ENCODE measurements at regions of chr14 and their contacts with region 1.

Region 1: GRCh38 chr14:88492272-88493089 is 62.3 kb downstream of the PTPN21 start:
- DNase-seq: peak; percentile 48
- ATAC-seq: peak; percentile 98
- H3K4me3 ChIP-seq: no peak overlapping the region
- H3K27ac ChIP-seq: no peak overlapping the region
- H3K4me1 ChIP-seq: no peaks in the 10 kb centered on the region
- H3K27me3 ChIP-seq: no peaks in the 10 kb centered on the region
- CTCF ChIP-seq: peak; percentile 65 to 90 (median 83); a peak in 5 of 6 replicates
- POLR2A ChIP-seq: no peak
- RAD21 ChIP-seq: peak; percentile 72

Region 2: DNA sequence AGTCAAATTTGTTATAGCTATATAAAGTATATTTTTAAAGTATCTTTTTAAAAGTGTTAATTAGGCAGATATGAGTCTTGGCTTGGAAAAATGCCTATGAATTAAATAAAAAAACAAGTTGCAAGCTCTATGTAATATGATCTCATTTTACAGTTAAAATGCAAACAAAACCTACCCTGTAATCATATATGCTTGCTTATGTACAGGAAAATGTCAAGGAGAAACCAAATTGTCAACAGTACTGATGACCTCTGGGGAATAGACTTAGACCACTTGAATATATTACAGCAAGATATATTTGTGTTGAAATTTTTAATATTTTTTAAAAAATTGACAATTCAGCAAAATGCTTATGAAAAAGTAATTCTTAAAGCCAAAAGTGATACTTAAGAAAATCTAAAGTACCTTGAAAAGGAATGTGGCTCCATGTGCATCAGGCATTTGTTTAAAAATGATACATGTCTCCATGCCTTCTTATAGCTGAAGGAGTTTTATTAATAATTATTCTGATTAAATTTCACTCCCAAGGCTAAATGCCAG is 13.1 kb after region 1 on chr14:
- CTCF ChIA-PET with region 1: no interaction called
- POLR2A ChIA-PET with region 1: no interaction called
- RAD21 ChIA-PET with region 1: no interaction called
- intact Hi-C with region 1: no loop called
- DNase-seq: no peak
- ATAC-seq: no peak
- H3K4me3 ChIP-seq: no peak overlapping the region
- H3K27ac ChIP-seq: no peak overlapping the region
- H3K4me1 ChIP-seq: no peaks in the 10 kb centered on the region
- H3K27me3 ChIP-seq: no peaks in the 10 kb centered on the region
- CTCF ChIP-seq: no peak
- POLR2A ChIP-seq: no peak
- RAD21 ChIP-seq: no peak

Region 3: DNA sequence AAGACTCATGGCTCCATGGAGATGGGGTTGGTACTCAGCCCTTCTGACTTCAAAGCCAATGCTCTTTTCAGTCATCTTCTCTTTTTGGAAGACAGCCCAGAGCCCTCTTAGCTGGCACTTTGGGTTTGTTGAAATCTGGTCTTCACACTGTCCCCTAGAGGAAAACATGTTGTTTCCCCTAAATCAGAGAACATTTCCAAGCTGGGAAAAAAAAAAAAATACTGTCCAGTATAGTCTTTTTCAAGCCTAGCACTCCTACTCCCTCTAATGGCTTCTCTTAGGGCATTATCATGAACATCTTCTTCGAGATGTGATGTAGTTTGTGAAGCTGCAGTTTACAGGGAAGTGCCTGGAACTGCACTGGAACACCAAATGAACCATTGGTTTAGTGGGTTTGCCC is 67.4 kb after region 1 on chr14:
- CTCF ChIA-PET with region 1: interaction called, 6 read pairs
- POLR2A ChIA-PET with region 1: no interaction called
- RAD21 ChIA-PET with region 1: interaction called in 1 of 2 experiments, 3 read pairs
- intact Hi-C with region 1: loop called (anchors 1 kb)
- DNase-seq: no peak
- ATAC-seq: no peak
- H3K4me3 ChIP-seq: no peak overlapping the region
- H3K27ac ChIP-seq: no peak overlapping the region
- H3K4me1 ChIP-seq: peaks cover 8 to 25% of the 10 kb centered on the region in 2 experiments
- H3K27me3 ChIP-seq: no peaks in the 10 kb centered on the region
- CTCF ChIP-seq: peak; percentile 33 to 62 (median 51); a peak in 4 of 6 replicates
- POLR2A ChIP-seq: no peak
- RAD21 ChIP-seq: peak; percentile 55

Region 4: DNA sequence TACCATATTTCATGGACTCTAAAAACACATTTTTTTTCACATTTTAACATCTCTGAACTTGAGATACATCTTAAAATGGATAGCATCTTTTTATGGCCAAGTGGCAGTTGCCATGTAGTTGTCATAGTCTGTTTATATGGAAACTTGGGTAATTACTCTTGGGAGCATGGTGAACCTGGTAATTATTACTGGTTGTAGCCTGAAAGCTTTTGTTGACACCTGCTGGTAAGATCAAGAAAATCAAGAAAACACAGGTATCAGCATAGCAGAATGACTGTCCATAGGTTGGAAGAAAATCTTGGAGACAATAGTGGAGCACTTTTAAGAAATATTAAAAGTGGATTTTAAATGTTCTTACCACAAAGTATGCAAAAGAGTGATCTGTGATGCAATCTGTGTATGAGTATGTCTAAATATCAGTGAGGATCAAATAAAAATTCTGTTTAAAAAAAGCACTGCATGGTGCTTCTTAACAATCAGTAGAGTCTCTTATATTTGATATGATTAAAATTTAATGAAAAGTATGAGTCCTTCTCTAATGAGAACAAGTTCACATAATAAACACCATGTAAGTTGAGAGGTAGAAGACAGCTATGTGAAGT is 376.2 kb after region 1 on chr14:
- CTCF ChIA-PET with region 1: no interaction called
- POLR2A ChIA-PET with region 1: no interaction called
- RAD21 ChIA-PET with region 1: no interaction called
- intact Hi-C with region 1: loop called (anchors 2 kb)
- DNase-seq: peak; percentile 24
- ATAC-seq: peak; percentile 82
- H3K4me3 ChIP-seq: no peak overlapping the region
- H3K27ac ChIP-seq: no peak overlapping the region
- H3K4me1 ChIP-seq: no peaks in the 10 kb centered on the region
- H3K27me3 ChIP-seq: no peaks in the 10 kb centered on the region
- CTCF ChIP-seq: peak; percentile 42 to 62 (median 59); a peak in 4 of 6 replicates
- POLR2A ChIP-seq: no peak
- RAD21 ChIP-seq: peak; percentile 77

Region 5: GRCh38 chr14:89013084-89013504 is 520.6 kb after region 1 on chr14:
- CTCF ChIA-PET with region 1: no interaction called
- POLR2A ChIA-PET with region 1: no interaction called
- RAD21 ChIA-PET with region 1: no interaction called
- intact Hi-C with region 1: loop called (anchors 5 kb)
- DNase-seq: peak; percentile 50
- ATAC-seq: peak; percentile 90
- H3K4me3 ChIP-seq: no peak overlapping the region
- H3K27ac ChIP-seq: no peak overlapping the region
- H3K4me1 ChIP-seq: no peaks in the 10 kb centered on the region
- H3K27me3 ChIP-seq: no peaks in the 10 kb centered on the region
- CTCF ChIP-seq: peak in 2 of 3 experiments; percentile 42 to 63; a peak in 5 of 6 replicates
- POLR2A ChIP-seq: no peak
- RAD21 ChIP-seq: peak; percentile 71

Measured in HCT116 (cell line).